GM12878 (cell line): ENCODE measurements at regions of chr18 and their contacts with region 1.

Region 1: GRCh38 chr18:42114310-42114943 is 159.4 kb downstream of the PIK3C3 start:
- DNase-seq: peak; percentile 42
- ATAC-seq: peak; percentile 96
- H3K4me3 ChIP-seq: no peak overlapping the region
- H3K27ac ChIP-seq: no peak overlapping the region; the same call in 1 of the 2 replicates
- H3K4me1 ChIP-seq: peaks cover 11% of the 10 kb centered on the region
- H3K27me3 ChIP-seq: no peaks in the 10 kb centered on the region
- CTCF ChIP-seq: peak; percentile 77 to 93 (median 84)
- EP300 ChIP-seq: no peak
- POLR2A ChIP-seq: no peak
- RAD21 ChIP-seq: peak; percentile 99

Region 2: GRCh38 chr18:41933778-41934177 is 180.6 kb before region 1 on chr18:
- CTCF ChIA-PET with region 1: no interaction called
- POLR2A ChIA-PET with region 1: no interaction called
- RAD21 ChIA-PET with region 1: no interaction called
- SMC1A ChIA-PET with region 1: no interaction called
- in situ Hi-C with region 1: no loop called
- intact Hi-C with region 1: no loop called
- DNase-seq: no peak
- ATAC-seq: peak; percentile 45
- H3K4me3 ChIP-seq: no peak overlapping the region
- H3K27ac ChIP-seq: no peak overlapping the region
- H3K4me1 ChIP-seq: no peaks in the 10 kb centered on the region
- H3K27me3 ChIP-seq: no peaks in the 10 kb centered on the region
- CTCF ChIP-seq: no peak
- EP300 ChIP-seq: no peak
- POLR2A ChIP-seq: no peak
- RAD21 ChIP-seq: no peak

Region 3: GRCh38 chr18:42001801-42002200 is 112.6 kb before region 1 on chr18:
- CTCF ChIA-PET with region 1: no interaction called
- POLR2A ChIA-PET with region 1: no interaction called
- RAD21 ChIA-PET with region 1: no interaction called
- SMC1A ChIA-PET with region 1: no interaction called
- in situ Hi-C with region 1: no loop called
- intact Hi-C with region 1: no loop called
- DNase-seq: no peak
- ATAC-seq: no peak
- H3K4me3 ChIP-seq: no peak overlapping the region
- H3K27ac ChIP-seq: no peak overlapping the region
- H3K4me1 ChIP-seq: no peaks in the 10 kb centered on the region
- H3K27me3 ChIP-seq: no peaks in the 10 kb centered on the region
- CTCF ChIP-seq: no peak
- EP300 ChIP-seq: no peak
- POLR2A ChIP-seq: no peak
- RAD21 ChIP-seq: no peak

Region 4: DNA sequence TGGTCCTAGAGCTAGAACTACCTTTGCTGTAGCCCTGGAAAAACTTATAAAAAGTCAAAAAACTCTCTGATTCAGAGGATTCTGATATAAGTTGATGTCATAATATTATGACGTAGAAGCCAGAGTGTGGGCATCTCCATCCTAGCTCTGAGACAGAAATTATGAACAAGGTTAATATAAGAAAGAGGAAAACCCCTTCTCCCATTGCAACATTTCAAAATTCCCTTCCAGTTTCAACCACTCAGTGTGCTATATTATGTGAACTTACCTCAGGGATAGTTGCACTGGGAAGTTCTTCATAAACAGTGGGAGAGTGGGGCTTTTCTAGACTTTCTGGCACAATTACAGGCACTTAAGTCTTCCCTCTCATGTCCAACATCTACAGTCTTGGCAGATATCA is 12.2 kb after region 1 on chr18:
- CTCF ChIA-PET with region 1: interaction called, 20 read pairs
- POLR2A ChIA-PET with region 1: interaction called, 3 read pairs
- RAD21 ChIA-PET with region 1: interaction called, 8 read pairs
- SMC1A ChIA-PET with region 1: interaction called, 27 read pairs
- in situ Hi-C with region 1: no loop called
- intact Hi-C with region 1: no loop called
- DNase-seq: no peak
- ATAC-seq: no peak
- H3K4me3 ChIP-seq: no peak overlapping the region
- H3K27ac ChIP-seq: no peak overlapping the region
- H3K4me1 ChIP-seq: no peaks in the 10 kb centered on the region
- H3K27me3 ChIP-seq: no peaks in the 10 kb centered on the region
- CTCF ChIP-seq: no peak
- EP300 ChIP-seq: no peak
- POLR2A ChIP-seq: no peak
- RAD21 ChIP-seq: no peak

Region 5: DNA sequence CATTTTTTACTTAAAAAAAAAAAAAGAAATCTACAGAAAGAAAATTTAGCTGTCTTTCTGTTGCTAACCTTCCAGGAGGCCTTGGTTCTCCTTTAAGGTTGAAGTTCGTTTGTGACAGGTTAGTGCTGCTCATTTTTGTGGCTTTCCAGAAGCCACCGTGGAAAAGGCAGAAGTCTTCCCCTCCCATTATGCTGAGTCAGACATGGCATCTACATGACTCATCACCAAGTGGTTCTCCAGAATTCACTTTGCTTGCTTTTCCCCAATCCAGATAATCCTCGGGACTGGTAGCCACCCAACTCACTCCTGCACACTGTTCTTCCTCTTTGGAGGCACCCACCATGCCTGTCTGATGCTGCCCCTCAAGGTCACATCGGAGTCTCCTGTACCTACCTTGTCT is 69.3 kb after region 1 on chr18:
- CTCF ChIA-PET with region 1: interaction called, 67 read pairs
- POLR2A ChIA-PET with region 1: interaction called, 7 read pairs
- RAD21 ChIA-PET with region 1: interaction called, 81 read pairs
- SMC1A ChIA-PET with region 1: interaction called, 135 read pairs
- in situ Hi-C with region 1: no loop called
- intact Hi-C with region 1: loop called (anchors 2 kb)
- DNase-seq: no peak
- ATAC-seq: no peak
- H3K4me3 ChIP-seq: no peak overlapping the region
- H3K27ac ChIP-seq: no peak overlapping the region
- H3K4me1 ChIP-seq: no peaks in the 10 kb centered on the region
- H3K27me3 ChIP-seq: no peaks in the 10 kb centered on the region
- CTCF ChIP-seq: no peak
- EP300 ChIP-seq: no peak
- POLR2A ChIP-seq: no peak
- RAD21 ChIP-seq: no peak

Region 6: GRCh38 chr18:42242758-42243157 is 128.3 kb after region 1 on chr18:
- CTCF ChIA-PET with region 1: interaction called, 10 read pairs
- POLR2A ChIA-PET with region 1: no interaction called
- RAD21 ChIA-PET with region 1: interaction called, 7 read pairs
- SMC1A ChIA-PET with region 1: interaction called, 4 read pairs
- in situ Hi-C with region 1: no loop called
- intact Hi-C with region 1: no loop called
- DNase-seq: no peak
- ATAC-seq: peak; percentile 84
- H3K4me3 ChIP-seq: no peak overlapping the region
- H3K27ac ChIP-seq: no peak overlapping the region
- H3K4me1 ChIP-seq: no peaks in the 10 kb centered on the region
- H3K27me3 ChIP-seq: no peaks in the 10 kb centered on the region
- CTCF ChIP-seq: no peak
- EP300 ChIP-seq: no peak
- POLR2A ChIP-seq: no peak
- RAD21 ChIP-seq: no peak

Region 7: DNA sequence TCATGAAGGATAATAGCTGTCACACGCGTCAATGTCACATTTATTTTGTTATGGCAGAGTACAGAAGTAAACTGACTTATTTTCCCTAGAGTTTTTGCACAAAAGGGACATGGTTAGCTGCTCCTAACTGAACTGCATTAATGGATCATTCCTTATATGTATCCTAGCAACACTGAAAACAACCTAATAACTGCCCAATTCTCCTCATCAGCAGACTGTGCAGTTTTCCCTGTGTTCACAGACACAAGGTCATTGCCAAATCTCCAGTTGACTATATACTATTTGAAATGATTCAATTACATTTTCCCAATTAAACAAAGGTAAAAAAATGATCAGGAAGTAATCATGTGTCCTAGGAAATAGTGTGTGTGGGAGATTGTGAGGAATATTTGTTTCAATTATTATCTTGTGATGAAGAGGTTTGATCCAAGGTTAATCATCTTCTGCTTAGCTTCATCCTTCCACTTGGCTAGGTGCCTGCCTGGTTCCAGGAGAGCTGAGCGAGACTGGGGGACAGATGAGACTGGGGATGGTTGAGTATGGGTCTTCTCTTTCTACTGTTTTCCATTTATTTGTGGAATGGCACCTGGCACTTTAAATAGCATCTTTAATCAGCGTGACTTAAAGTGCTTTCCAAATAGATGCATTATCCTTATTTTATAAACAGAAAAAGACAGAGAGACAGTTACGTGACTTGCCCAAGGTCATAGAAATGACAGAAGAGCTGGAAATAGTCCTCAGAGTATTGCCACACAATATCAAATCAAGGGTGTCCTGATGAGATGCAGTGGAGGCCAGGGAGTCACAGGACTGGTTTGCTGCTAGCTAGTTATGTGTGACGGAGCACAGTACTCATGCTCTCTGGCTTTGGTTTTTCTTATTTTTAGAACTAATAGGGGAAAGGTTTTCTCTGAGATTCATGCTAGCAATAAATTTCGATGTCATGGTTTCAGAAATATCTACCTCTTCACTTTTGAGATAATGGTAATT is 176.2 kb after region 1 on chr18:
- CTCF ChIA-PET with region 1: interaction called, 107 read pairs
- POLR2A ChIA-PET with region 1: no interaction called
- RAD21 ChIA-PET with region 1: interaction called, 82 read pairs
- SMC1A ChIA-PET with region 1: interaction called, 114 read pairs
- in situ Hi-C with region 1: no loop called
- intact Hi-C with region 1: no loop called
- DNase-seq: no peak
- ATAC-seq: no peak
- H3K4me3 ChIP-seq: no peak overlapping the region
- H3K27ac ChIP-seq: no peak overlapping the region
- H3K4me1 ChIP-seq: no peaks in the 10 kb centered on the region
- H3K27me3 ChIP-seq: no peaks in the 10 kb centered on the region
- CTCF ChIP-seq: no peak
- EP300 ChIP-seq: no peak
- POLR2A ChIP-seq: no peak
- RAD21 ChIP-seq: no peak

Region 8: DNA sequence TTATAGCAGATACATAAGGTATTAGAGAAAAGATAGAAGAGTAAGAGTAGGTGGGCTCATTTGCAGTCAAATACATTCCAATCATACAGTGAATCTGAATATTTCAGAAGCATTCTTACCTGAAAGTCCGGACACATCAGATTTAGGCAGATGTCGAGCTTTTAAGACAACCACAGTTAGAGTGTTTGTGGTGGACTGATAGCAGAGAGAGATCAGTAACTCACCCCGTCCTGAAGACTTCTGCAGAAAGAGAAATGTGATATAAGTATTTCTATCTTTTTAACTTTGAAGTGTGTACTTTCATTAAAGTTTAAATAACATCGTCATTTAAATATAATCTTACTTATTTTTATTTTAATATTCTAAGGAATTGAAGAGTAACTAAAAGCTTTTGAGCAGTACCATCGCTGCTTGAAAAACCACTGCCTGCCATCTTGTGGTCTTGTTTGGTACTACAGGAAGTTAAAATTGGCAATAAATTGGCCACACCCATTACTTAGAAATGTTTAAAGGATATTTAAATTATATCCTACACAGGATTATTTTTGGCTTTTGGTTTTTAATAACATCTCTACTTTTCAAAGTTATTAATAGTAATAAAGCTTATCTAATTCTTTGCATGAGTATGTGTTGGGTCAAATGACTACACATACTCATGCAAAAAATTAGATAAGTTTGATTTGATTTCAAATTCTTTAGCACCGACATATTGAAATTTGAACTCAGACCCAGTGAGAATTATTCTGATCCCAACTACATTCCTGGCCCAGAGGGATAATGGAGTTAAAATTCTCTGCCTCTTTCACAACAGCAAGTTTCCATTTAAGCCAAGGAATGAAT is 1157.4 kb after region 1 on chr18:
- CTCF ChIA-PET with region 1: interaction called, 95 read pairs
- POLR2A ChIA-PET with region 1: no interaction called
- RAD21 ChIA-PET with region 1: interaction called, 42 read pairs
- SMC1A ChIA-PET with region 1: interaction called, 66 read pairs
- in situ Hi-C with region 1: loop called (anchors 10 kb)
- intact Hi-C with region 1: loop called (anchors 1 kb)
- DNase-seq: no peak
- ATAC-seq: peak; percentile 67
- H3K4me3 ChIP-seq: no peak overlapping the region
- H3K27ac ChIP-seq: no peak overlapping the region
- H3K4me1 ChIP-seq: no peaks in the 10 kb centered on the region
- H3K27me3 ChIP-seq: no peaks in the 10 kb centered on the region
- CTCF ChIP-seq: peak; percentile 57 to 70 (median 61)
- EP300 ChIP-seq: no peak
- POLR2A ChIP-seq: no peak
- RAD21 ChIP-seq: peak; percentile 74